OCI-LY7 (cell line): ENCODE measurements at regions of chr7 and their contacts with region 1.

Region 1: GRCh38 chr7:152330827-152331226 is 105.0 kb downstream of the KMT2C start:
- DNase-seq: no peak
- H3K4me3 ChIP-seq: no peak overlapping the region
- H3K27ac ChIP-seq: no peak overlapping the region
- H3K4me1 ChIP-seq: peaks cover 21% of the 10 kb centered on the region
- CTCF ChIP-seq: no peak

Region 2: GRCh38 chr7:152313831-152314604 is 16.8 kb before region 1 on chr7:
- CTCF ChIA-PET with region 1: no interaction called
- POLR2A ChIA-PET with region 1: interaction called, 19 read pairs
- intact Hi-C with region 1: no loop called
- DNase-seq: no peak
- H3K4me3 ChIP-seq: no peak overlapping the region
- H3K27ac ChIP-seq: no peak overlapping the region
- H3K4me1 ChIP-seq: peaks cover 10% of the 10 kb centered on the region
- CTCF ChIP-seq: no peak